Left cardiac atrium (tissue), 4 donors: ENCODE measurements at regions of chr19 and their contacts with region 1.

Region 1: DNA sequence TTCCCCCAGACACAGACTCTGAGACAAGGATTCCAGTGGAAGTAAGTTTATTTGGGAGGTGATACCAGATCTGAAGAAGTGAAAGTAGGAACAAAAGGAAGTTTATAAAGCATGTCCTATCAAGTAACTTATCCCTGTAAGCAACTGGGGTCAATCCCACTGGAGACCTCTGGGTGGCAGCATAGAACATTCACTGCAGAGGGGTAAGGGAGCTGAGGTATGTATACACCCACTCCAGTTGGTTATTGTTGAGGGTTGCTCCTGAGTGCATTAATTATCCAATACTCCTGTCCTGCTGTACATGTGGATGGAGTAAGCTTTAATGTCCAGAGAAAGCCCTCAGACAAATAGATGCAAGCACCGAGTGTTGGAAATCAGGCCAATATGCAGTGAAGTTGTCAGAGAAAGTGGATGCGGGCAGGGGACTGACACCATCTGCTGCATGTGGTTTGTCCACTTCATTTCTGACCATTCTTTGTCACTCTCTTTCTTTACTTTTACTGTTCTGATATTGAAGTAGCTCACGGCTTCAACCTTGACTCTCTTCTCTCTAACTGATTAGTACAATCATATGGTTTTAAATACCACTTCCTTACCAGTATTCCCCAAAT is 46.7 kb downstream of the NOTCH3 start:
- DNase-seq: no peak
- ATAC-seq: peak in 1 of 2 donors; percentile 24

Region 2: GRCh38 chr19:15091901-15092753 is 62.0 kb before region 1 on chr19:
- intact Hi-C with region 1: loop called (anchors 2 to 5 kb)
- DNase-seq: no peak
- ATAC-seq: peak; percentile 53 to 55

Region 3: GRCh38 chr19:15101479-15102082 is 52.5 kb before region 1 on chr19:
- intact Hi-C with region 1: loop called in 1 of 2 experiments (anchors 5 kb)
- DNase-seq: no peak
- ATAC-seq: peak; percentile 34 to 49